ENCODE measurements at regions of chr7 and their contacts with region 1.

Region 1: DNA sequence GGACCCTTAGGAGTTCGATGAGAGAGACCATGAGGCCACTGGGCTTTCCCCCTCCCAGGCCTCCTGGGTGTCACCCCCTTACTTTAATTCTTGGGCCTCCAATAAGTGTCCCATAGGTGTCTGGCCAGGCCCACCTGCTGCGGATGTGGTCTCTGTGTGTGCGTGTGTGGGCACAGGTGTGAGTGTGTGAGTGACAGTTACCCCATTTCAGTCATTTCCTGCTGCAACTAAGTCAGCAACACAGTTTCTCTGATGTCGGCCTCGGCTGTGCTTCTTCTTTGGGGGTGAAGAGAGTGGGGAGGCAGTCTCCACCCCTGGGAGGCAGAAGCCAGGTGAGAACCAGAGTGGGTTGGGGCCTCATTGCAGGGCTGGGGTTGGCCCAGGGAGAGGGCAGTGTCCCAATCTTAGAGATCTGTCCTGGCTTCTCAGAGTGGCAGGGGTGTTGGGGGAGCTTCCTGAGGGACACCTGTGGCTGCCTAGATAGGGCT is 1.5 kb downstream of the PVRIG start:
- DNase-seq: peak; percentile 33 to 90 (median 87)
- ATAC-seq: peak; percentile 79
- H3K4me3 ChIP-seq: peak overlapping the region; percentile 81
- H3K4me3 Mint-ChIP-seq: peak overlapping the region; percentile 81 to 99 (median 97)
- H3K27ac ChIP-seq: peak overlapping the region; percentile 99
- H3K27ac Mint-ChIP-seq: peak overlapping the region; percentile 96 to 100 (median 99)
- H3K4me1 ChIP-seq: peaks cover 38 to 45% of the 10 kb centered on the region in 2 donors
- H3K4me1 Mint-ChIP-seq: peaks cover 35 to 74% (median 66%) of the 10 kb centered on the region in 7 donors
- H3K27me3 ChIP-seq: no peaks in the 10 kb centered on the region
- H3K27me3 Mint-ChIP-seq: no peaks in the 10 kb centered on the region

Region 2: DNA sequence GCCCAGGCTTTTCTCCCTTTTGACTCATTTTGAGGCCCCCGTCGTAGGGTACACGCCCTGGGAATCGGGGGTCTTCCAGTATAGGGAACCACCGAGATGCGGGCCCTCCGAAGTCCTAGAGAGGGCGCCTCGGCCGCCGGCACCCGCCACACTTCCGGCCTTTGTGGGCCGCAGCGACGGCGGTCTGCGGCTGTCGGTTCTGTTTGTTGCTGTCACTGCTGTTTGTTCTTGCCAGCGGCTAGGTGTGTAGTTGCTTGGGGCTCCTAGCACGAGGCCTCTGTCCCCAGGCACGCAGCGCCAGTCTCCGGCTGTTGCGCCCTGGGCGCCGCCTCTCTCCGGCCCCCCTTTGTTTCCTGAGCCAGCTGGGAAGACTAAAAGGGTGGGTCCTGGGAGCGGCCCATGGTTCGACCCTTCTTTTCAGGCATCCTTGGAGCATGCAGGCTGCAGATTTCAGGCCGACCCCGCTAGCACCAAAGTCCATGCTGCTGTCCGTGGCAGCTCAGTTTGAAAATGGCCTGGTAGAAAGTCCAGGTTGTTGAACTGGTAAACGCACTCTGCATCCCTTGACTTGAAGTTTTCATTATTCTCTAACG is 223.6 kb before region 1 on chr7:
- CTCF ChIA-PET with region 1: no interaction called
- POLR2A ChIA-PET with region 1: no interaction called
- intact Hi-C with region 1: loop called (anchors 5 kb)
- DNase-seq: peak; percentile 55 to 76 (median 72)
- ATAC-seq: peak; percentile 96
- H3K4me3 ChIP-seq: peak overlapping the region; percentile 43
- H3K4me3 Mint-ChIP-seq: peak overlapping the region; percentile 71 to 85 (median 76)
- H3K27ac ChIP-seq: peak overlapping the region; percentile 71
- H3K27ac Mint-ChIP-seq: peak overlapping the region; percentile 57 to 95 (median 87)
- H3K4me1 ChIP-seq: peaks cover 7 to 11% of the 10 kb centered on the region in 2 donors
- H3K4me1 Mint-ChIP-seq: peaks cover 7 to 21% (median 18%) of the 10 kb centered on the region in 7 donors
- H3K27me3 ChIP-seq: no peaks in the 10 kb centered on the region
- H3K27me3 Mint-ChIP-seq: peaks cover 0 to 3% (median 0%) of the 10 kb centered on the region in 5 donors

Region 3: GRCh38 chr7:100119062-100119700 is 102.1 kb before region 1 on chr7 and contains the starts of genes CNPY4 and TAF6:
- CTCF ChIA-PET with region 1: interaction called, 3 read pairs
- POLR2A ChIA-PET with region 1: interaction called, 5 read pairs
- intact Hi-C with region 1: loop called in 1 of 2 experiments (anchors 1 kb)
- DNase-seq: peak; percentile 88 to 97 (median 95)
- ATAC-seq: peak; percentile 88
- H3K4me3 ChIP-seq: peak within 1 kb of the TSS; percentile 100
- H3K4me3 Mint-ChIP-seq: peak within 1 kb of the TSS; percentile 90 to 100 (median 98)
- H3K27ac ChIP-seq: peak within 1 kb of the TSS; percentile 88
- H3K27ac Mint-ChIP-seq: peak within 1 kb of the TSS; percentile 97 to 99 (median 98)
- H3K4me1 ChIP-seq: peaks cover 12 to 19% of the 10 kb centered on the region in 2 donors
- H3K4me1 Mint-ChIP-seq: peaks cover 18 to 34% (median 28%) of the 10 kb centered on the region in 7 donors
- H3K27me3 ChIP-seq: no peaks in the 10 kb centered on the region
- H3K27me3 Mint-ChIP-seq: no peaks in the 10 kb centered on the region
- total RNA-seq, gene CNPY4: 22.1 to 68.2 (median 40.3) TPM
- total RNA-seq, gene TAF6: 39.5 to 68.1 (median 55.0) TPM

Region 4: GRCh38 chr7:100148559-100149350 is 72.5 kb before region 1 on chr7 and contains the start of gene LAMTOR4:
- CTCF ChIA-PET with region 1: interaction called, 4 read pairs
- POLR2A ChIA-PET with region 1: interaction called, 30 read pairs
- intact Hi-C with region 1: loop called (anchors 1 to 5 kb)
- DNase-seq: peak; percentile 84 to 99 (median 97)
- ATAC-seq: peak; percentile 98
- H3K4me3 ChIP-seq: peak within 1 kb of the TSS; percentile 97
- H3K4me3 Mint-ChIP-seq: peak within 1 kb of the TSS; percentile 87 to 100 (median 96)
- H3K27ac ChIP-seq: peak within 1 kb of the TSS; percentile 98
- H3K27ac Mint-ChIP-seq: peak within 1 kb of the TSS; percentile 95 to 99 (median 98)
- H3K4me1 ChIP-seq: peaks cover 15 to 19% of the 10 kb centered on the region in 2 donors
- H3K4me1 Mint-ChIP-seq: peaks cover 27 to 45% (median 38%) of the 10 kb centered on the region in 7 donors
- H3K27me3 ChIP-seq: no peaks in the 10 kb centered on the region
- H3K27me3 Mint-ChIP-seq: no peaks in the 10 kb centered on the region
- total RNA-seq, gene LAMTOR4: 132 to 200 (median 173) TPM

Region 5: GRCh38 chr7:100190048-100190711 is 31.1 kb before region 1 on chr7:
- CTCF ChIA-PET with region 1: interaction called, 26 read pairs
- POLR2A ChIA-PET with region 1: interaction called, 7 read pairs
- intact Hi-C with region 1: loop called in 1 of 2 experiments (anchors 1 kb)
- DNase-seq: peak in 7 of 9 donors; percentile 36 to 66 (median 56)
- ATAC-seq: peak; percentile 86
- H3K4me3 ChIP-seq: no peak overlapping the region
- H3K4me3 Mint-ChIP-seq: peak overlapping the region in 3 of 10 donors; percentile 12 to 18 (median 15)
- H3K27ac ChIP-seq: peak overlapping the region; percentile 15
- H3K27ac Mint-ChIP-seq: peak overlapping the region in 8 of 9 donors; percentile 19 to 90 (median 76)
- H3K4me1 ChIP-seq: peaks cover 0 to 22% of the 10 kb centered on the region in 2 donors
- H3K4me1 Mint-ChIP-seq: peaks cover 16 to 56% (median 50%) of the 10 kb centered on the region in 7 donors
- H3K27me3 ChIP-seq: no peaks in the 10 kb centered on the region
- H3K27me3 Mint-ChIP-seq: no peaks in the 10 kb centered on the region

Region 6: GRCh38 chr7:100271716-100272537 is 50.7 kb after region 1 on chr7:
- CTCF ChIA-PET with region 1: interaction called, 4 read pairs
- POLR2A ChIA-PET with region 1: interaction called, 4 read pairs
- intact Hi-C with region 1: loop called in 1 of 2 experiments (anchors 1 kb)
- DNase-seq: peak; percentile 97 to 99 (median 98)
- ATAC-seq: peak; percentile 96
- H3K4me3 ChIP-seq: peak overlapping the region; percentile 61
- H3K4me3 Mint-ChIP-seq: peak overlapping the region; percentile 78 to 89 (median 82)
- H3K27ac ChIP-seq: peak overlapping the region; percentile 61
- H3K27ac Mint-ChIP-seq: peak overlapping the region in 4 of 9 donors; percentile 21 to 84 (median 46)
- H3K4me1 ChIP-seq: peaks cover 0 to 4% of the 10 kb centered on the region in 2 donors
- H3K4me1 Mint-ChIP-seq: peaks cover 8 to 19% (median 17%) of the 10 kb centered on the region in 7 donors
- H3K27me3 ChIP-seq: no peaks in the 10 kb centered on the region
- H3K27me3 Mint-ChIP-seq: peaks cover 0 to 4% (median 0%) of the 10 kb centered on the region in 5 donors

Region 7: GRCh38 chr7:100407285-100408180 is 186.3 kb after region 1 on chr7:
- CTCF ChIA-PET with region 1: no interaction called
- POLR2A ChIA-PET with region 1: interaction called, 4 read pairs
- intact Hi-C with region 1: loop called in 1 of 2 experiments (anchors 5 kb)
- DNase-seq: peak in 7 of 9 donors; percentile 35 to 69 (median 53)
- ATAC-seq: peak; percentile 97
- H3K4me3 ChIP-seq: no peak overlapping the region
- H3K4me3 Mint-ChIP-seq: no peak overlapping the region
- H3K27ac ChIP-seq: no peak overlapping the region
- H3K27ac Mint-ChIP-seq: peak overlapping the region in 1 of 9 donors; percentile 65
- H3K4me1 ChIP-seq: no peaks in the 10 kb centered on the region
- H3K4me1 Mint-ChIP-seq: peaks cover 0 to 5% (median 2%) of the 10 kb centered on the region in 7 donors
- H3K27me3 ChIP-seq: no peaks in the 10 kb centered on the region
- H3K27me3 Mint-ChIP-seq: peaks cover 0 to 32% (median 0%) of the 10 kb centered on the region in 5 donors

Measured in naive thymus-derived CD4-positive, alpha-beta T cell (primary cell).